ENCODE measurements at regions of chr7 and their contacts with region 1.

Region 1: GRCh38 chr7:131007394-131008330 is 273.7 kb upstream of the KLF14 start:
- DNase-seq: peak in 1 of 2 donors; percentile 67
- ATAC-seq: peak; percentile 20 to 80 (median 70)
- H3K4me3 ChIP-seq: no peak overlapping the region
- H3K27ac ChIP-seq: peak overlapping the region in 9 of 10 donors; percentile 6 to 70 (median 46)
- H3K4me1 ChIP-seq: peaks cover 10 to 67% (median 59%) of the 10 kb centered on the region in 9 donors
- H3K27me3 ChIP-seq: no peaks in the 10 kb centered on the region
- CTCF ChIP-seq: peak in 7 of 9 donors; percentile 27 to 74 (median 69)

Region 2: DNA sequence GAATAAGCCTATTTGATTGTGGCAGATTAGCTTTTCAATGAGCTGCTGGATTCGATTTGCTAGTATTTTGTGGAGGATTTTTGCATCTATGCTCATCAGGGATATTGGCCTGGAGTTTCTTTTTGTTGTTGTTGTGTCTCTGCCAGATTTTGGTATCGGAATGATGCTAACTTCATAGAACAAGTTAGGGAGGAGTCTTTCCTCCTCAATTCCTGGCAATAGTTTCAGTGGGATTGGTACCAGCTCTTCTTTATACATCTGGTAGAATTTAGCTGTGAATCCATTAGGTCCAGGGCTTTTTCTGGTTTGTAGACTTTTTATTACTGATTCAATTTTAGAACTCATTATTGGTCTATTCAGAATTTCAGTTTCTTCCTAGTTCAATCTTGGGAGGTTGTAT is 230.2 kb before region 1 on chr7:
- intact Hi-C with region 1: loop called in 1 of 10 experiments (anchors 5 kb)
- DNase-seq: no peak
- ATAC-seq: no peak
- H3K4me3 ChIP-seq: no peak overlapping the region
- H3K27ac ChIP-seq: no peak overlapping the region
- H3K4me1 ChIP-seq: no peaks in the 10 kb centered on the region
- H3K27me3 ChIP-seq: peaks cover 0 to 11% (median 0%) of the 10 kb centered on the region in 7 donors
- CTCF ChIP-seq: no peak

Region 3: GRCh38 chr7:130912862-130913631 is 94.6 kb before region 1 on chr7:
- intact Hi-C with region 1: loop called in 1 of 10 experiments (anchors 5 kb)
- DNase-seq: peak; percentile 29 to 67
- ATAC-seq: peak; percentile 68 to 91 (median 78)
- H3K4me3 ChIP-seq: peak overlapping the region in 9 of 10 donors; percentile 14 to 59 (median 49)
- H3K27ac ChIP-seq: peak overlapping the region; percentile 30 to 92 (median 82)
- H3K4me1 ChIP-seq: peaks cover 15 to 86% (median 63%) of the 10 kb centered on the region in 9 donors
- H3K27me3 ChIP-seq: no peaks in the 10 kb centered on the region
- CTCF ChIP-seq: no peak

Region 4: DNA sequence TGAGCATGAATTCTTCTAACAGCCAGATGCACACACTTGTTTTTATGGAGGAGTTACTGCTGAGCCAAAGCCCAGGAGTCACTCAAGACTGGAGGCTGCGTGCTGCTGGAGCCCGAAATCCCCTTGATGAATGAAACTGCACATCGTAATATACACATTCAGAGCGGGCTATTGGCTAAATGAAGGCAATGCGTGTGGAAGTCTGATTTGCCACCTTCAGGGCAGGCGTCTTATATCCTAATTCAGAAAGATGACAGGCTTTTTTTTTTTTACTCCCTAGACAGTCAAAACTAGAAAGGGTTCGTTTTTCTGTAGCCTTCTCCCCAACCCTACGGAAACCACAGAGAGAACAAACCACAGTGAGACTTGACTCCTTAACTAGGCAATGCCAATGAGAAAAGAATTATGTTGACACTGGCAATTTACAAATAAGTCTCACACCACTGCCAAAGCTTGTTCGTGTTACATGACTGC is 46.5 kb before region 1 on chr7:
- intact Hi-C with region 1: no loop called
- DNase-seq: no peak
- ATAC-seq: peak in 3 of 8 donors; percentile 15 to 33 (median 30)
- H3K4me3 ChIP-seq: peak overlapping the region in 3 of 10 donors; percentile 1 to 44 (median 15)
- H3K27ac ChIP-seq: peak overlapping the region in 6 of 10 donors; percentile 2 to 90 (median 47)
- H3K4me1 ChIP-seq: peaks cover 0 to 80% (median 51%) of the 10 kb centered on the region in 9 donors
- H3K27me3 ChIP-seq: no peaks in the 10 kb centered on the region
- CTCF ChIP-seq: no peak

Measured in heart right ventricle (tissue), 16 donors.